ENCODE measurements at regions of chr11 and their contacts with region 1.

Region 1: DNA sequence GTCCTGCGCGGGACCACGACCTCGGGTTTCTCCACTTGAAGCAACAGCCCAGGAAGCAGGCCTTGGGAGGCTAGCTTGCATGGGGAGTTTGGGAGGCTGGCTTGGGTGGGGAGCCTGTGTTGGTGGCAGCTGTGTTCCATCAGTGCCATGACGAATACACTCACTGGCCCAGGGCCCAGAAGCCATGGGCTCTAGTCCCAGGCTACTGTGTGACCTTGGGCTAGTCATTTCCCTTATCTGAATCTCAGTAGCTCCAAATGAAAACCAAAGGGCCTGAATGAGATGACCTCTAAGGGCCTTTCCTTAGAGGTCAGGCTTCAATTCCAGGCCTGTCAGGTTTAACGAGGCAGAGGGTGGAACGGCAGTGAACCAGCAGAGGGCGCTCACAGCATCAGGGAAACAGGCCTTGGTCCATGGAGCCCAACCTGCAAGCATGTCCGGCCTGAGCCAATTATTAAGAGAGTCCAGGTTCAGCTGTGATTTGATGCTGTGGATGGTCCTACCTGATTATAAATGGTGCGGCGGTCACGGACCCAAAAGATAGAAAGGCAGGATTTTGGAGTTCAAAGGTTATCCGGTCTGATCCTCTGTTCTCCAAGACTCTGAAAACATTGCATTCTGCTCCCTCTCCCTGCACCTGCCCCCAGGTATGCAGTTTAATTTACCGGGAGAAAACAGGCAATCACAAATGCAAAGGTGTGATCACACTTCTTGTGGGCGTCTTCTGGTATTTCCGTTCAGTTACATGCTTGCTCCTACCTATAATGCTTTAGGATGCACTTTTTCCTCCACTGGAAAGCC is 15.9 kb downstream of the PTPN5 start:
- DNase-seq: peak; percentile 46
- ATAC-seq: peak; percentile 91
- H3K4me3 ChIP-seq: no peak overlapping the region
- H3K27ac ChIP-seq: no peak overlapping the region
- H3K4me1 ChIP-seq: no peaks in the 10 kb centered on the region
- H3K27me3 ChIP-seq: peaks cover 5 to 23% of the 10 kb centered on the region in 2 experiments; a peak in 3 of 5 replicates
- CTCF ChIP-seq: peak; percentile 82
- EP300 ChIP-seq: no peak
- POLR2A ChIP-seq: no peak
- RAD21 ChIP-seq: 0 out of 2 replicates have a peak, but pooled peaks have one; percentile 20

Region 2: GRCh38 chr11:18608376-18608775 is 167.3 kb before region 1 on chr11:
- CTCF ChIA-PET with region 1: no interaction called
- POLR2A ChIA-PET with region 1: no interaction called
- in situ Hi-C with region 1: no loop called
- intact Hi-C with region 1: no loop called
- DNase-seq: no peak
- ATAC-seq: no peak
- H3K4me3 ChIP-seq: no peak overlapping the region
- H3K27ac ChIP-seq: no peak overlapping the region
- H3K4me1 ChIP-seq: no peaks in the 10 kb centered on the region
- H3K27me3 ChIP-seq: no peaks in the 10 kb centered on the region
- CTCF ChIP-seq: no peak
- EP300 ChIP-seq: no peak
- POLR2A ChIP-seq: no peak
- RAD21 ChIP-seq: no peak

Region 3: DNA sequence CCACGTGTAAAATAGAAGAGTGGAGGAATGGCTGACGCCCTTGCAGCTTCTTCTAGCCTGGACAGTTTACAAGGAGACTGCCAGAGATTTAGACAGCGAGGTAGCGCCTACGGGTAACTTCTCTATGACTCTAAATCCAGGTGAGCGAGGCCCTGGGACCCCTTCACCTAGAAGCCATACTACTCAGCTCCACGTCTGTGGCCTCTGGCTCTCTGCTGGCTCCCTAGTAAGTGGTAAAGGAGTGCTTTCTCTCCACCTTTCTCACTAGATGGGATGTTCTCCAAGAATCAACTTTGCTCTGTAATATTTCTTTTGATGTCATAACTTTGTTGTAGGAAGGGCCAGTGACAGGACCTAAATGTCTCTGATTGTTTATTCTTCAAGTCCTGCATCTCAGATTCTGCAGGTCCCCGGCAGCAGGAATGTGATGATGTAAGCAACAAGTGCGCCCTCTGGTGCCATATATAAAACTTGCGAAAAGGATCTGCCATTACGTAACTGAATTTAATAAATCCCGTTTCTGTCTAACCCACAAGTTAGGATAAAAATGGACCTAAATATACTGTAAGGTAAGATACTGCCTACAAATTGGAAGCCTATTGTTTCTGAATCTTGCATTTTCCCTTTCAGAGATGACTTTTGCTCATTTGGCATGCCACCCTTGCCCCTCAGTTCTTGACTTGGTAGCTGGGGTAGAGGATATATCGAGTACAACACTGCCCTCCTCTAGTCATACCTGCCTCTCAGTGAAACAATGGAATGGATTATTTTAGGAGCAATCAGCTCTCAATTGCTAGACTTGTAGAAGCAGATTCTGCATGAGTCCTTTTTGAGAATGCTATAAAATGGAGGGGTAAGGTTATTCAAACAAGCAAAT is 26.9 kb after region 1 on chr11:
- CTCF ChIA-PET with region 1: interaction called, 4 read pairs
- POLR2A ChIA-PET with region 1: no interaction called
- in situ Hi-C with region 1: no loop called
- intact Hi-C with region 1: loop called (anchors 1 kb)
- DNase-seq: peak; percentile 52
- ATAC-seq: peak; percentile 33; the same call in 1 of the 3 replicates
- H3K4me3 ChIP-seq: no peak overlapping the region
- H3K27ac ChIP-seq: no peak overlapping the region
- H3K4me1 ChIP-seq: no peaks in the 10 kb centered on the region
- H3K27me3 ChIP-seq: no peaks in the 10 kb centered on the region; a peak in 1 of 5 replicates
- CTCF ChIP-seq: peak; percentile 70
- EP300 ChIP-seq: no peak
- POLR2A ChIP-seq: no peak
- RAD21 ChIP-seq: no peak

Region 4: DNA sequence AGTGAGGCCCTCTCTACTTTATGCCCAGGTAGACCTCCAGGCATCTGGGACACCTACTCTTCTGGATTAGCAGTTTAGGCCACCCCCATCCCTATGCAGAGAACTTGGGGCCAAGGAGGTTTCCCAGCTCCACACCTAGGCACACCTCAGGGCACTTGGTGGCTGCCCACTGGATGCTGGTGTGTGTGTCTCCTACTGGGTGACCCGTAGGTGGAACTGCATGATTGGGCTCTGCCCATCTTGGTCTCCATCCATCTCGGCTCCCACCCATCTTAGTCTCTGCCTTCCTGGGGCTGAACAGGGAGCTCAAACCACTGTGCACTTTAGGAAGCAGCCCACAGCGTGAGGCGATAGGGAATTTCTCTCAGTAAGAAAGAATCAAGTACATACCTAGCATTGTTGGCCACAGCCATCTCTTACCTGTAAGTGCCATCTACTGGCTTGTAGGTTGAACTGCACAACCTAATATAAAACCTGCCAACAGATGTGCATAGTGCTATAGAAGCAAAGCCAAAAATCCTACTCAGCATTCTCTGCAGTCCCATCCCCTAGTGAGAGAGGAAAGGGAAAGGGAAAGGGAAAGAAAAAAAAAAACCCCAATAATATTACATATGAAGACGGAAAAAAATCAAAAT is 77.5 kb after region 1 on chr11:
- CTCF ChIA-PET with region 1: interaction called, 7 read pairs
- POLR2A ChIA-PET with region 1: no interaction called
- in situ Hi-C with region 1: no loop called
- intact Hi-C with region 1: loop called (anchors 1 kb)
- DNase-seq: peak; percentile 36
- ATAC-seq: peak; percentile 93
- H3K4me3 ChIP-seq: no peak overlapping the region
- H3K27ac ChIP-seq: no peak overlapping the region
- H3K4me1 ChIP-seq: no peaks in the 10 kb centered on the region
- H3K27me3 ChIP-seq: no peaks in the 10 kb centered on the region; a peak in 1 of 5 replicates
- CTCF ChIP-seq: peak; percentile 74
- EP300 ChIP-seq: no peak
- POLR2A ChIP-seq: no peak
- RAD21 ChIP-seq: peak; percentile 34; the same call in 1 of the 2 replicates